ENCODE measurements at regions of chr2 and their contacts with region 1.

Region 1: GRCh38 chr2:30273261-30273861 is 42.0 kb downstream of the LBH start:
- DNase-seq: no peak
- H3K4me3 Mint-ChIP-seq: peak overlapping the region; percentile 71
- H3K27ac Mint-ChIP-seq: peak overlapping the region; percentile 99
- H3K4me1 Mint-ChIP-seq: peaks cover 72% of the 10 kb centered on the region
- H3K27me3 Mint-ChIP-seq: no peaks in the 10 kb centered on the region

Region 2: DNA sequence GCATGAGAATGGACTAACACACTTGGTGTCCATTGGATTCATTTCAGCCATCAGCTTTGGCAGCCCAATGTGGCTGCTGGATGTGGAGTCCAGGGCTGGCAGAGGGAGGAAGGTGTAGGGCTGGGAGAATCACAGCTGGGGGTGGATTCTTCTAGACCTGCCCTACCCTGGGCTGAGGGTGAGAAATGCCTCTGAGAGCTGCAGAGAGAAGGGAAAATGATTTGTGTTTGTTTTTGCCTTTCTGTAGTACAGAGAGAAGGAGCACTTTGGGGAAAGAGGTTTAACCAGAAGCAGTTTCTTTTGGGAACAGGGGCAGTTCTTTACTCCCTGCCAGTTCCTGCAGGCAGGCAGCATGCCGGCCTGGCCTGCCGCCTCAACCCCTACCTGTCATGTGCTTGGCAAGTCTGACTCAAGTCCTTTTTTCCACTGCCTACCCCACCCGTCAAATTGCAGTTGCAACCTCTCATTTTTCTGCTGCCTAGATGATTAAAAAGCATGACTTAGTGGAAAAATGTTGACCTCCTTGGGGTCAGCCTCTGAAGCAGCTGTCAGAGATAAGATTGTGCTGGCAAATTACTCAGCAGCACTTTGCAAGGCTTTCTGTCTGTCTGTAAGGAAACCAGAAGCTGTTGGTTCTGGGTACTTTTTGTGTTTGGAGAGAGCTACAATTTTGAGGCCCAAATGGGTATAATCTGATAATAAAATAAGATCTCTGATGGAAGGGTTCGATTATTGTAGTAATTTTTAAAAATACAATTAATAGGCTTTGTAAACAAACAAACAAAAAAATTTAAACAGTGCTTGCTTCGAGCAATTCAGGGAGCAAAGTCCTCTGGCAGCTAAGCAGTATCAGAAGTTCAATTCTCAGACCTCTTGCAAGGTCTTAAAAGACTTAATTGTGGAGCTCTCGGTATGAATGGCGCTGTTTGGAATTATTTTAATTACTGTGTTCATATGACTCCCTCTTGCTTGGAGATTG is 20.3 kb before region 1 on chr2:
- intact Hi-C with region 1: loop called (anchors 1 kb)
- DNase-seq: peak; percentile 83
- H3K4me3 Mint-ChIP-seq: peak overlapping the region; percentile 53
- H3K27ac Mint-ChIP-seq: peak overlapping the region; percentile 94
- H3K4me1 Mint-ChIP-seq: peaks cover 72% of the 10 kb centered on the region
- H3K27me3 Mint-ChIP-seq: no peaks in the 10 kb centered on the region

Region 3: DNA sequence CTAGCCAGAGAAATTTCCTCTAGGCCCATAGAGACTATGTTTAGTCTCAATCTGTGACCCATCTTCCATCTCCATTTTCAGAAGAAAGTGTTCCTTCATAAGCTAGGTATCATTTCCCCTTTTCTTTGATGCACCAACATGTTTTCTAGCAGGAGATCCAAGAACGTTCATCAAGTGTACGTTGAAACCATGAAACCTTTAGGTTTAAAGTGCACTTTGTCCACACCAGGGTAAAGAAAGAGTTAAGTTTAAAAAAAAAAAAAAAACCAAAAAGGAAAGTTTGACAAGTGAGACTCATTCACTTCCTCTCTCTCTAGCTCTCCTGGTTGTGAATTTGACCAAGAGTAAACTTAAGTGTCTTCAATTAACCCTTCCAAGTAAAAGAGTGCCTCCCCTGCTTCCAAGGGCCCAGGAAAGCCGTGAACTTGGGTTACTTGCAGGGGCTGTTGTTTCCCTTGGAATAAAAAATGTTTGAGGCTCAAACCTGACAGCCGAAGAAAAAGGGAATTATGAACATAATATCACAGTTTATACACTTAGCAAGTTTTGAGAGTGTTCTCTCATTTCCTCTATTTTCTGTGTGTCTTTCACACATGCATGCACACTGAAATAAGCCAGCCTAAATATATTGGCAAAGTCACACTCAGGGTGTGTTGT is 14.6 kb after region 1 on chr2:
- intact Hi-C with region 1: loop called (anchors 1 kb)
- DNase-seq: no peak
- H3K4me3 Mint-ChIP-seq: peak overlapping the region; percentile 29
- H3K27ac Mint-ChIP-seq: peak overlapping the region; percentile 81
- H3K4me1 Mint-ChIP-seq: peaks cover 29% of the 10 kb centered on the region
- H3K27me3 Mint-ChIP-seq: no peaks in the 10 kb centered on the region

Region 4: DNA sequence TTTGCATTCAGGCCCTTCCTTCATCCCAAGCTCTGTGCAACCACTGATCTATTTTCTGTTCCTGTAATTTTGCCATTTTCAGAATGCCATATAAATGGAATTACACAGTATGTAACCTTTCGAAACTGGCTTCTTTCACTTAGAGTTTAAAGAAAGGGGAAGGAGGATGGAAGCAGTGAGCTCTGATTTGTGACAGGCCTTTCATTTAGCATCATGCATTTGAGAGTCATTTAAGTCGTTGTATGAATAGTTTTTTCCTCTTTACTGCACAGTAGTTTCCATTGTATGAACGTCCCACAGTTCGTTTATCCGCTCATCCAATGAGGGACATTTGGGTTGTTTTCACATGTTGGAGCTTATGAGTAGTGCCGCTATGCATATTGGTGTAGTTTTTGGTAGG is 24.9 kb after region 1 on chr2:
- intact Hi-C with region 1: loop called (anchors 2 kb)
- DNase-seq: no peak
- H3K4me3 Mint-ChIP-seq: no peak overlapping the region
- H3K27ac Mint-ChIP-seq: peak overlapping the region; percentile 79
- H3K4me1 Mint-ChIP-seq: peaks cover 11% of the 10 kb centered on the region
- H3K27me3 Mint-ChIP-seq: no peaks in the 10 kb centered on the region

Region 5: DNA sequence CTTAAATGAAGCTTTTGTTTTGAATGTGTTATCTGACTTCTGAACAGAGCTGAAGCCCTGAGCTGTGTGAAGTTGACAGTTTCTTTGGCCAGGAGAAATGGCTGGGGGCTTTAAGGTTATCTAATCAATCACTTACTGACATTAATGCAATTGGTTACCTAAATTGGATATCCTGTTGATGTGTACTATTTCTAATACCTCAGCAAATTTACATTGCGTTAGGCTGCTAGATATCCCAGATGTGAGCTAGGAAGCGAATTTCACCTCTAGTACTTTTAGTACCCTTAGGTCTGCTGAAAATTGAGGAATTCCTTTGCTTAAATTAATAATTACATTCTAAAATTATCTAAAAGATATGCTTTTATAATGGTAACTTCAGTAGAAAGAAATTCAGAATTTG is 275.7 kb after region 1 on chr2:
- intact Hi-C with region 1: no loop called
- DNase-seq: no peak
- H3K4me3 Mint-ChIP-seq: no peak overlapping the region
- H3K27ac Mint-ChIP-seq: no peak overlapping the region
- H3K4me1 Mint-ChIP-seq: peaks cover 1% of the 10 kb centered on the region
- H3K27me3 Mint-ChIP-seq: no peaks in the 10 kb centered on the region

Measured in activated CD4-positive, alpha-beta T cell treated with anti-CD3 and anti-CD28 coated beads, Interleukin-2, amount 10 ng/mL, durations not matched to agents 24 days and 14 days (primary cell).